Colonic mucosa (tissue), 4 donors: ENCODE measurements at regions of chr12 and their contacts with region 1.

Region 1: GRCh38 chr12:48165094-48165981 is 8.0 kb upstream of the ASB8 start:
- DNase-seq: peak; percentile 58
- H3K4me3 ChIP-seq: no peak overlapping the region
- H3K27ac ChIP-seq: no peak overlapping the region
- H3K4me1 ChIP-seq: no peaks in the 10 kb centered on the region
- H3K27me3 ChIP-seq: no peaks in the 10 kb centered on the region
- CTCF ChIP-seq: peak; percentile 91

Region 2: DNA sequence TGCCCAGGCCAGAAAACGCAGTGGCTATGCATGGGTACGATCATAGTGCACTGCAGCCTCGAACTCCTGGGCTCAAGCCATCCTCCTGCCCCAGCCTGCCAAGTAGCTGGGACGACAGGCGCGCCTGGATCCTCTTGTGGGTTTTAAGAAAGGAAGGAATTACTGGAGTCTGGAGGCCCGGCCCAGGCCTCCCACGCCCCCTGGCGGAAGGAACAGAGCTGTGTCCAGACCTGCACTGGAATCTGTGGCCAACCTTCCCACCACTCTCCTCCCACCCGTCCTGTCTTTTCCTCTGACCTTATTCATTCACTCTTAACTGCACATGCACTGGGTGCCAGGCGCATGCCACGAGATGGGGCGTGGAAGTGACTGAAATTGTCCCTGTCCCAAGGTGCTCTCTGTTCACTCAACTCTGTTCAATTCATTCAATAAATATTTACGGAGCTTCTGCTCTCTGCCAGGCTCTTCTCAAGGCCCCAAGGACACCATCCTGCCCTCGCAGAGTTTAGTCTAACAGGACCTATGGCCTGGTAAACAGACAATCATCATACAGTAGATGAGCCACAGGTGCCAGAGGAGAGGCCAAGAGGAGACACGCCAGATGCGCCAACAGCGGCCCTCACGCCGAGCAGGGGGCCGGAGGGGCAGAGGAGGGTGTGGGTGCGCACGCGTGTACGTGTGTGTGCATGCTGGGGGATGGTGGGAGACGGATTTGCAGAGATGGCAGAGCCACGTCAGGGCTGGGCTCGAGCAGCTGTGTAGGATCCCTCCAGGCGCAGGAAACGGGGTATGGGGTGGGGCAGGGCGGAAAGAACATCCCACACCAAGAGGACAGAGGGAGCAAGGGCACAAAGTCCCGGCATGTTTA is 215.7 kb before region 1 on chr12:
- intact Hi-C with region 1: loop called (anchors 10 kb)
- DNase-seq: peak; percentile 88
- H3K4me3 ChIP-seq: no peak overlapping the region
- H3K27ac ChIP-seq: no peak overlapping the region
- H3K4me1 ChIP-seq: peaks cover 15% of the 10 kb centered on the region
- H3K27me3 ChIP-seq: no peaks in the 10 kb centered on the region
- CTCF ChIP-seq: peak; percentile 88

Region 3: GRCh38 chr12:47988073-47989022 is 177.0 kb before region 1 on chr12:
- intact Hi-C with region 1: loop called (anchors 10 kb)
- DNase-seq: no peak
- H3K4me3 ChIP-seq: no peak overlapping the region
- H3K27ac ChIP-seq: no peak overlapping the region
- H3K4me1 ChIP-seq: no peaks in the 10 kb centered on the region
- H3K27me3 ChIP-seq: no peaks in the 10 kb centered on the region
- CTCF ChIP-seq: no peak

Region 4: GRCh38 chr12:48084066-48084465 is 81.3 kb before region 1 on chr12:
- intact Hi-C with region 1: loop called (anchors 5 kb)
- DNase-seq: no peak
- H3K4me3 ChIP-seq: no peak overlapping the region
- H3K27ac ChIP-seq: no peak overlapping the region
- H3K4me1 ChIP-seq: no peaks in the 10 kb centered on the region
- H3K27me3 ChIP-seq: no peaks in the 10 kb centered on the region
- CTCF ChIP-seq: no peak